ENCODE measurements at regions of chr3 and their contacts with region 1.

Region 1: GRCh38 chr3:193030276-193030675 is 112.6 kb upstream of the MB21D2 start:
- DNase-seq: no peak
- H3K4me3 ChIP-seq: no peak overlapping the region
- H3K27ac ChIP-seq: no peak overlapping the region
- H3K4me1 ChIP-seq: no peaks in the 10 kb centered on the region
- H3K27me3 ChIP-seq: no peaks in the 10 kb centered on the region
- CTCF ChIP-seq: no peak
- POLR2A ChIP-seq: no peak

Region 2: DNA sequence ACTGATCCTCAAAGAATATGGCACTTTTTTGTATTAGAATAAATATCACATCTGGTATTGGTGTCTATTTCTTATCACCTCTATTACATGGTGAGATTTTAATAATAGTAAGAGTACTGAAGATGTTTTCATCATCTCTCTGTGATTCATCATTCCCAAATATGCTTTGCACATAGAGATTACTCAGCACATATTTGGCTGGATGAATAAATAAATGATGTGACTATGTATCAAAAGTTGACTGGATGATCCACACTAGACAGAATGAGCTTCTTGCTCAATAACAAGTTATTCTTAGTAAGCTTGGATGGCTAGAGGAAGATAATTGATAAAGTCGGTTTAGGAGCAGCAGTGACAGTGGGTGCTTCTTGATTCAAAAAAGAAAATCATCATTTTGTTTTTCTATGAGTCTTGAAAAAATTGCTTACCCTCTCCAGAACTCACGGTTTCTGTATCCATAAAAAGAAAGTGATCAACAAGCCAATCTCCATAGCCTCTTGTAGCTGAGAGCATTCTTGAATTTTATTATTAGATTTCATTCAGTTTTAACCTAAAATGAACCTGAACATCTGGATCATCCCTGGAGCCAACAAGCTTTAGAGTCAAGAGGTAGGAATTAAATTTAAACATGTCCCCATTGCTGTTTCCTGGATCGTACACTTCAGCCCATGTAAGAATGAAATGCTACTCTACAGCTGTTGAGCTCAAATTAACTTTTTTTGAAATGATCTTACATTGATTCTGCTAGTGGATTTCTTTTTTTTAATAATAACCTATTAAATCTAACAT is 1936.0 kb before region 1 on chr3:
- intact Hi-C with region 1: no loop called
- DNase-seq: no peak
- H3K4me3 ChIP-seq: no peak overlapping the region
- H3K27ac ChIP-seq: no peak overlapping the region
- H3K4me1 ChIP-seq: no peaks in the 10 kb centered on the region
- H3K27me3 ChIP-seq: no peaks in the 10 kb centered on the region
- CTCF ChIP-seq: no peak
- POLR2A ChIP-seq: no peak

Region 3: GRCh38 chr3:192395506-192395905 is 634.8 kb before region 1 on chr3:
- intact Hi-C with region 1: loop called (anchors 5 kb)
- DNase-seq: no peak
- H3K4me3 ChIP-seq: no peak overlapping the region
- H3K27ac ChIP-seq: no peak overlapping the region
- H3K4me1 ChIP-seq: no peaks in the 10 kb centered on the region
- H3K27me3 ChIP-seq: no peaks in the 10 kb centered on the region
- CTCF ChIP-seq: no peak
- POLR2A ChIP-seq: no peak

Region 4: GRCh38 chr3:193446965-193447602 is 416.8 kb after region 1 on chr3:
- intact Hi-C with region 1: no loop called
- DNase-seq: no peak
- H3K4me3 ChIP-seq: no peak overlapping the region
- H3K27ac ChIP-seq: no peak overlapping the region
- H3K4me1 ChIP-seq: no peaks in the 10 kb centered on the region
- H3K27me3 ChIP-seq: no peaks in the 10 kb centered on the region
- CTCF ChIP-seq: no peak
- POLR2A ChIP-seq: no peak